Activated T-helper 1 cell treated with anti-CD3 and anti-CD28 coated beads, Interleukin-12 subunit alpha, Interleukin-12 subunit beta, Interleukin-2, Interleukin-4 antibody, amounts not matched to agents 30 ng/mL and 10 ng/mL and 1 ng/mL, durations not matched to agents 14 hours and 24 hours and 36 hours (primary cell): ENCODE measurements at regions of chr3 and their contacts with region 1.

Region 1: DNA sequence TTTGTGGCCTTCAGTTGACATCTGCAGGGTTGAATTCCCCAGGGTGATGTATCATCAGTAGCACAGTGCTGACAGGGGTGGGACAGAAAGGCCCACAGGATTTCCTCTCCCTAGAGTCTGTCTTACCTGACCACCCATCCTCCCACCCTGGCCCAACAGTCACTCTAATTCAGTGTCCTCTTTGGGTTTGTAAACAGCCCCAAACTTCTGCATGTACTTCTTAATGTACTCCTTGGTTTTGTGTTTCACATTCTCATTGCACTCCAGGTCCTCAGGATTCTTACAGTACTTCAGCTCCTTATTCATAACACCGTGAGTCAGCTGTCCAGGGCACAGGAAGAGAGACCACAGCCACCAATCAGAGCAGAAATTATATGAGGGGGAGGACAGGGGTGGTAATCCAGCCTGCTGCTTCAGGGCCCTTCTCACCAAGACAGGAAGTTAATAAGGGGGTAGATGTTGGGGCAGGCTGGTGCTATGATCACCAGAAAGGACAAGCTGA is 37.5 kb downstream of the NBEAL2 start:
- DNase-seq: no peak
- H3K4me3 Mint-ChIP-seq: peak overlapping the region; percentile 59
- H3K27ac Mint-ChIP-seq: peak overlapping the region; percentile 87
- H3K4me1 Mint-ChIP-seq: peaks cover 57% of the 10 kb centered on the region
- H3K27me3 Mint-ChIP-seq: no peaks in the 10 kb centered on the region

Region 2: GRCh38 chr3:46960081-46960701 is 56.8 kb before region 1 on chr3:
- intact Hi-C with region 1: loop called (anchors 2 kb)
- DNase-seq: no peak
- H3K4me3 Mint-ChIP-seq: peak overlapping the region; percentile 15
- H3K27ac Mint-ChIP-seq: peak overlapping the region; percentile 83
- H3K4me1 Mint-ChIP-seq: peaks cover 61% of the 10 kb centered on the region
- H3K27me3 Mint-ChIP-seq: no peaks in the 10 kb centered on the region

Region 3: GRCh38 chr3:46987743-46988401 is 29.1 kb before region 1 on chr3:
- intact Hi-C with region 1: loop called (anchors 2 kb)
- DNase-seq: peak; percentile 91
- H3K4me3 Mint-ChIP-seq: peak overlapping the region; percentile 83
- H3K27ac Mint-ChIP-seq: peak overlapping the region; percentile 94
- H3K4me1 Mint-ChIP-seq: peaks cover 79% of the 10 kb centered on the region
- H3K27me3 Mint-ChIP-seq: no peaks in the 10 kb centered on the region

Region 4: DNA sequence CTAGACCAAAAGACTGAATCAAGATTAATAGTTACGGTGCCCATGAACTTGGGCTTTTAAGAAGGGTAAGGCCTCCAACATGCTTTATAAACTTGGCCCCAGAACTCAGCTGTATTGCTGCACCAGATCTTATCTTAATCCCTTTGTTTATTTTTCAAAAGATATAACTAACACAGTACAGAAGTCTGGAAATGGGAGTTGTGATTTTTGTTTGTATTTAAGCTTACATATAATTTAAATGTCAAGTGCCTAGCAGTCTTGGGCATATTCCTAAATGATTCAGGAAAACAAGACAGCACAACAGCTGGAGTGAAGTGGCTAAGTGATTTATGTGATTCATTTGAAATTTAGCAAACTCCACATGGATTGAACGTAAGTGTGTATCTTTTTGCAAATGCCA is 18.6 kb after region 1 on chr3:
- intact Hi-C with region 1: loop called (anchors 1 kb)
- DNase-seq: no peak
- H3K4me3 Mint-ChIP-seq: no peak overlapping the region
- H3K27ac Mint-ChIP-seq: no peak overlapping the region
- H3K4me1 Mint-ChIP-seq: peaks cover 21% of the 10 kb centered on the region
- H3K27me3 Mint-ChIP-seq: no peaks in the 10 kb centered on the region

Region 5: DNA sequence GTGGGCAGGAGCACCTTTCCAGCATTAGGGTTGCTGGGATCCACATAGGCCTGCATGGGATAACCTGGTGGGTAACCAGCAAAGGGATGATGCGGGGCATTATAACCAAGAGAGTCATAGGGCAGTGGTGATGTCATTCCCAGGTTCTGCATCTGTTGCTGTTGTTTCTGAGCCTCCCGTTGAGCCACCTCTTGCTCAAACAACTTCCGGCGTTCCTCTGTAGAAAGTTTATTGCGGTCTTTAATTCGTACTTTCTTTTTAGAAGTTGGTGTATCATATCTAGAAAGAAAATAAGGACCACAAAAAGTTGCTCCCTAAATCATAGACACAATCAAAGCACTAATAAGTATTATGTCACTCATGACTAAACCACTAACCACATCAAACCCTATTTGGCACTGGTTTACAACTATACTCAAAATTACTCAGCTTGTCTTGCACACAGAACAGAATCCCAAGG is 40.3 kb after region 1 on chr3:
- intact Hi-C with region 1: loop called (anchors 1 kb)
- DNase-seq: peak; percentile 37
- H3K4me3 Mint-ChIP-seq: no peak overlapping the region
- H3K27ac Mint-ChIP-seq: peak overlapping the region; percentile 55
- H3K4me1 Mint-ChIP-seq: peaks cover 41% of the 10 kb centered on the region
- H3K27me3 Mint-ChIP-seq: no peaks in the 10 kb centered on the region

Region 6: DNA sequence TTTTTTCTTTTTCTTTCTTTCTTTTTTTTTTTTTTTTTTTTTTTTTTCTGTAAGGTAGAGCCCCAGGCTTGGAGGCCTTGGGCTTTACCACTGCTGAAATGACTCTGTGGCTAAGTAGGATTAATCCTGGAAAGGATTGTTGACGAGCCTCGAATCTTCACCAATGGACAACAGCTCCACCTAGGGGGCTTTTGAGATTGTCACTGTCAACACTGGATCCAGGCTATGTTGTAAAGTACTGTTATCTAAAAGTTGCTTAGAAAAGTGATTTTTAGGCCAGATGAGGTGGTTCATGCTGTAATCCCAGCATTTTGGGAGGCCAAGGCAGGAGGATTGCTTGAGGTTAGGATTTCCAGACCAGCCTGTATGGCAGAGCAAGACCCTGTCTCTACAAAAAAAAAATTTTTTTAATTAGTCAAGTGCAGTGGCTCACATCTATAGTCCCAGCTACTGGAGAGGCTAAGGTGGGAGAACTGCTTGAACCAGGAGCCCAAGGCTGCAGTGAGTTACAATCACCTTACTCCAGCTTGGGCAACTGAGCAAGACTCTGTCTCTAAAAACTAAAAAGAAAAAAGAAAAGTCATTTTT is 307.4 kb after region 1 on chr3:
- intact Hi-C with region 1: loop called (anchors 1 kb)
- DNase-seq: peak; percentile 23
- H3K4me3 Mint-ChIP-seq: no peak overlapping the region
- H3K27ac Mint-ChIP-seq: no peak overlapping the region
- H3K4me1 Mint-ChIP-seq: no peaks in the 10 kb centered on the region
- H3K27me3 Mint-ChIP-seq: no peaks in the 10 kb centered on the region